ENCODE measurements at regions of chr5 and their contacts with region 1.

Region 1: DNA sequence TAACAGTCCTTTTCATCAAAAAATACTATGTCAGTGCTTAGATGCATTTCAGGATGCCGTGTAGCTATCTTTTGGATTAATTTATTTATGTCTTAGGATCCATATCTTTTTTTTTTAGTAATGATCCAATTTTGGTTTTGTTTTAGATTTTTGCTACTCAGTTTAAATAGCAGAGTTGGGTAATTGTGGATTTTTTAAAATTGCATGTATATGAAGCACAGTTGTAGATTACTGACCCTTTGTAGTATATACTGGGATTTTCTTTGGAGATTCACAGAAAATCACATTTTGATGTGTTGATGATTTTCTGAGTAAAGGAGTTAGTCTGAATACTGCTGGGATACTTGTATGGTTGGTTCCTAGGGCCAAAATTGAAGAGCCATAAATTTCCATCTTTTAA is 111.8 kb downstream of the NIPBL start:
- DNase-seq: no peak
- CTCF ChIP-seq: no peak

Region 2: DNA sequence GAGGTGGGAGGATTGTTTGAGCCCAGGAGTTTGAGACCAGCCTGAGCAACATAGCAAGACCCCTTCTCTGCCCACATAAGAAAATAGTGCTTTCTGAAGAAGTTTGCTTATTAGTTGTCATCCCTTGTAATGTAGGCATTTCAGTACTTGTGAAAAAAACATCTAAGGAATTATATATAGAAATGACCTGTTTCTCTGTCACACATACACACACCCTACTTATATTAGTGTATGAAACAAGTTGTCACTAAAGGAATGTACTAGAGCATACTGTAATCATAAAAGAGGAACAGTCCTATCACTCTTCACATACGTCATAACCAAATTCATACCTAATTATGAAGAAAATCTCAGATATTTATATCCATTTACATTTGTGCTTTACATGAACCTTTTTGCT is 10.2 kb after region 1 on chr5:
- CTCF ChIA-PET with region 1: interaction called, 14 read pairs
- POLR2A ChIA-PET with region 1: no interaction called
- DNase-seq: no peak
- CTCF ChIP-seq: no peak

Measured in GM10248 (cell line).